Ascending aorta (tissue), 2 donors: ENCODE measurements at regions of chr17 and their contacts with region 1.

Region 1: DNA sequence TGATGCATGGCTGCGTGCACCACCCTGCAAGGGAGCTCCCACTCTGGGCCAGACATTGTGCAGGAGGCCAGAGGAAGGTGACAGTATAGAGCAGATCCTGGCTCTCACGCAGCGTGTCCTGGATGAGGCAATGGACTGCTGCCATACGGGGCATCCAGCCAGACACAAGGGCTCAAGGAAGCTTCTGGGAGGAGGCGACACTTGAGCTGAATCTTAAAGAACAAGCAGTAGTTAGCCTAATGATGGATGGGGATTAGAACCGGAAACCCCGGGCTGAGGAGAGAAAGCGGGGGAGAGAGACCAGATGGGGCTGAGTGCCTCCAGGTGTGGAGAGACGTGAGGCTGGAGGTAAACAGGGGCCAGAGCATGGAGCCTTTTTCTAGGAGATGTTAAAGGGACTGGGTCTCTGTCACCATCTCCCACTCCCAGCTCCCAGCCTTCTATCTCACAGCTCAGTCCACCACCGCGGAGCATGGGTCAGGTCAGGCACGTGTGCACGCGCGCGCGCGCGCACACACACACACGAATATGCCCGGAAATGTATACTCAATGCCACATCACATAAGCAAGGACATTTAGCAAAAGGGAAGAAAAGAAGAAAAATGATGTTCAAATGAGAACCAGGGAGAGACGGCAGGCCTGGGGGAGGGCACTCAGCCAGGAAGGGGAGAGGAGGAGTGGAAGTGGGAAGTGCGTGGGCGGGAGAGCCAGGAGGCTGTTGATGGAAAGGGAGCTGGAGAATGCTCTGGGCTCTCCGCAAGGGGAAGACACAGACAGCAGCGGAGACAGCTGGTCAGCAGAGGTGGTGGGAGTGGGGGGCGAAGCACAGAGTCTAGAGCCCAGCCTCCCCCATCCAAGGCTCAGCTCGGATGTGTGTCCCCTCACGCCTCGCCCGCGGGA is 46.2 kb downstream of the CCDC42 start:
- DNase-seq: peak in 1 of 2 donors; percentile 84
- H3K4me3 ChIP-seq: peak overlapping the region; percentile 19 to 41
- H3K27ac ChIP-seq: peak overlapping the region; percentile 95
- H3K4me1 ChIP-seq: peaks cover 22 to 40% of the 10 kb centered on the region in 2 donors
- H3K27me3 ChIP-seq: no peaks in the 10 kb centered on the region
- CTCF ChIP-seq: no peak

Region 2: GRCh38 chr17:8581002-8581658 is 117.3 kb before region 1 on chr17:
- intact Hi-C with region 1: no loop called
- DNase-seq: no peak
- H3K4me3 ChIP-seq: no peak overlapping the region
- H3K27ac ChIP-seq: peak overlapping the region; percentile 46 to 79
- H3K4me1 ChIP-seq: peaks cover 7 to 65% of the 10 kb centered on the region in 2 donors
- H3K27me3 ChIP-seq: no peaks in the 10 kb centered on the region
- CTCF ChIP-seq: no peak

Region 3: GRCh38 chr17:8649157-8650118 is 49.0 kb before region 1 on chr17:
- intact Hi-C with region 1: loop called (anchors 1 kb)
- DNase-seq: peak; percentile 76 to 96
- H3K4me3 ChIP-seq: no peak overlapping the region
- H3K27ac ChIP-seq: peak overlapping the region; percentile 89 to 98
- H3K4me1 ChIP-seq: peaks cover 6 to 32% of the 10 kb centered on the region in 2 donors
- H3K27me3 ChIP-seq: no peaks in the 10 kb centered on the region
- CTCF ChIP-seq: no peak